Calu3 (cell line): ENCODE measurements at regions of chr12 and their contacts with region 1.

Region 1: DNA sequence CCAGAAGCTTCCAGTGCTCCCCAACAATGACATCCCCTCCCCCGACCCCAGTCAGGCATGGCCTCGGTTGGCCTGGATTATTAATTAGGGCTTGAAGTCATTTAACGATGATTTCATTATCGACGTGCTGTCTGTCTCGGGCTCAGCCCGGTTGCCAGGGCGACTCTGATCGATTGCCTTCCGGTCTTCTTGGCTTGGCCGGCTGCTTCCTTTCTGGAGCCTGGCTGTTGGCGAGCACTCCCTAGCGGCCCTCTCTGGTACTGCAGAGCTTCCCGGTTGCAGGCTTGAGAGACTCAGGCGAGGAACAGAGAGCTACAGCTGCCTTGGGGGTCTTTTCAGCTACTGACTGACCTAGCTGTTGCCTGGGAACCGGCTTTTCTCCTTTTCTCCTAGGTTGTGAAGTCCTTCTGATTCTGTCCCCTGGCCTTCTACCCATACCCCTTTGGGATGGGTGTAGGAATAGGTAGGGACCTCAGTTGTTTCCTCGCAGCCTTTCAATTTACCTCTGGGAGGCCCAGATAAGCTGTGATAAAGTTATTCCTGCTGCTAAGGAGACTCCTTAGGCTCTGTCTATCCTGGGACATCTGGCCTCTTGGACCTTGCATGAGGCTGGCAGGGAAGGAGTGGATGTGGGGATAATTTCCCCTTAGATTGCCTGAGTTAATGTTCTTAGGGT is 5.5 kb upstream of the CISTR start:
- DNase-seq: peak; percentile 93
- H3K4me3 Mint-ChIP-seq: no peak overlapping the region
- H3K27ac Mint-ChIP-seq: no peak overlapping the region
- H3K4me1 Mint-ChIP-seq: no peaks in the 10 kb centered on the region
- H3K27me3 Mint-ChIP-seq: peaks cover 48% of the 10 kb centered on the region
- CTCF ChIP-seq: peak; percentile 94

Region 2: DNA sequence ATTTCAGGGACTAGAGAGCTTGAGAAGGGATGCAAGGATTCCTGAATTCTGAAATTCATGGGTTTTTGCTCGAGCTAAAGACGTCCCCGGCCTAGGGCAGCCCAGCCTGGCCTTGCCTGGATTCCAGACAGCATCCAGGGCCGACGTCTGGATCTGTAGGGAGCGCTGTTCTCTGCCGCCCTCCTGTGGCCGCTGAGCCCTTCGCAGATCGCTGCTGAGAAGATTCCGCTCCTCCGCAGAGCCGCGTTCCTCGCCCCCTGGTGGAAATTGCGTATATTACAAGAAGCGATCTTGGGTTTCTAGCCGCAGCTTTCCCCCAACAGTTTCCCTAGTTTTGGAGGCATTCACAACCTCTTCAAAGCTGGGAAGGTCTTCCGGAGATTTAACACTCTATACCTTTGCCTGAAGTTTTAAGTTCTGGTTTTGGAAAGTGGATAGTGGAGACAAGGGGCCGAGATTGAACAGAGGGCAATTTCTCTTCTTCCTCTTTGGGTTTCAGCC is 10.6 kb before region 1 on chr12:
- CTCF ChIA-PET with region 1: interaction called, 20 read pairs
- intact Hi-C with region 1: no loop called
- DNase-seq: peak; percentile 95
- H3K4me3 Mint-ChIP-seq: no peak overlapping the region
- H3K27ac Mint-ChIP-seq: no peak overlapping the region
- H3K4me1 Mint-ChIP-seq: no peaks in the 10 kb centered on the region
- H3K27me3 Mint-ChIP-seq: no peaks in the 10 kb centered on the region
- CTCF ChIP-seq: peak; percentile 95

Region 3: DNA sequence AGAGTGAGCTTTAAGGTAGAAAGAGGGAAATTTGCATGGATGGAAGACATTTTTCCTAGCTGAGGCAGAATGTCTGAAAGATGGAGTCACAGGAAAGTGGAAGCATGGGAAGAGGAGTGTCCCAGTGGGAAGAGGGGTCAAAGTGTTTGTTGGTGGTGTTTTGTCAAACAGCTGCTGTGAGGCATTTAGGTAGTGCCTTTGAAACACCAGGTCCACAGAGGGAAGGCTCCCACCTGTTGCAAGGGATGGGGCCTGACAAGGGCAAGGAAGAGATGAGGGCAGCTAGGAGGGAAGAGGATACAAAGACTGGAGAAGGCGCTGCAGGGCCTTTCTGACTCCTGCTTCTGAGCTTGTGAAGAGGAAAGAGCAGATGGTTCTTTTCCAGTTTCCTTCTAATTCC is 86.3 kb after region 1 on chr12:
- CTCF ChIA-PET with region 1: interaction called, 10 read pairs
- intact Hi-C with region 1: no loop called
- DNase-seq: no peak
- H3K4me3 Mint-ChIP-seq: no peak overlapping the region
- H3K27ac Mint-ChIP-seq: no peak overlapping the region
- H3K4me1 Mint-ChIP-seq: peaks cover 24% of the 10 kb centered on the region
- H3K27me3 Mint-ChIP-seq: peaks cover 18% of the 10 kb centered on the region
- CTCF ChIP-seq: no peak

Region 4: DNA sequence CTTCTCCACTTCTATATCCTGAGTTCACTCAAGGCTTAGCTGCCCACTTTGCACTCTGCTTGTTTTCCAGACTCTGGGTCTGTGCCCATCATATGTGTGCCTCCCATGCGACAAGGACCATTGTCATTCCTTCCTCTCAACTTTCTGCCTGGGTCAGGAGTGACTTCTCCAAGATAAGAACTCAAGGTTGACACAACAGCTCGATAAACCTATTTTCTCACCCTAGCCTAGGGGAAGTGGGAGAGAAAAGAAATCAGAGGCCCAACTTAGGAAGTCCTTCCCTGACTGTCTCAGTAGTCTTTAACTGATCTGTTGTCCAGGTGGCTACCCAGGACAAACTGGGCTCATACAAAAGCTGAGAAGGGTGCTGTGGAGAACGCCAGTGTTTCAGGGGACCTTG is 429.8 kb after region 1 on chr12:
- CTCF ChIA-PET with region 1: no interaction called
- intact Hi-C with region 1: no loop called
- DNase-seq: no peak
- H3K4me3 Mint-ChIP-seq: peak overlapping the region; percentile 75
- H3K27ac Mint-ChIP-seq: no peak overlapping the region
- H3K4me1 Mint-ChIP-seq: peaks cover 14% of the 10 kb centered on the region
- H3K27me3 Mint-ChIP-seq: peaks cover 20% of the 10 kb centered on the region
- CTCF ChIP-seq: no peak

Region 5: DNA sequence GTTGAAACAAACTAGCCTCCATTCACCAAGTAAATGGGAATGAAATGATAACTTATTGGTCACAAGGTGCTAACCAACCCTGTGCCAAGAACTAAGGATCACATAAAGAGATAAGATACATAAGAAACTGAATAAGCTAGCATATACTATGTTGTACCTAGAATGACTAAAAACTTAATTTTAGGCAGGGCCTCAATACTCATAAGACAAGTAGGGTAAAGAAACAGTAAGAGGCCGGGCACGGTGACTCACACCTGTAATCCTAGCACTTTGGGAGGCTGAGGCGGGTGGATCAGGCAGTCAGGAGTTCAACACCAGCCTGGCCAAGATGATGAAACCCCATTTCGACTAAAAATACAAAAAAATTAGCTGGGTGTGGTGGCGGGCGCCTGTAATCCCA is 2003.4 kb after region 1 on chr12:
- CTCF ChIA-PET with region 1: interaction called, 14 read pairs
- intact Hi-C with region 1: no loop called
- DNase-seq: no peak
- H3K4me3 Mint-ChIP-seq: no peak overlapping the region
- H3K27ac Mint-ChIP-seq: no peak overlapping the region
- H3K4me1 Mint-ChIP-seq: no peaks in the 10 kb centered on the region
- H3K27me3 Mint-ChIP-seq: no peaks in the 10 kb centered on the region
- CTCF ChIP-seq: no peak